ENCODE measurements at regions of chr17 and their contacts with region 1.

Region 1: GRCh38 chr17:75405365-75406221 is at the start of gene GRB2:
- DNase-seq: peak; percentile 100
- ATAC-seq: peak; percentile 90
- H3K4me3 Mint-ChIP-seq: peak within 1 kb of the TSS; percentile 96
- H3K27ac Mint-ChIP-seq: peak within 1 kb of the TSS; percentile 95
- H3K4me1 Mint-ChIP-seq: peaks cover 33% of the 10 kb centered on the region
- H3K27me3 Mint-ChIP-seq: peaks cover 2% of the 10 kb centered on the region
- total RNA-seq, gene GRB2: 149 to 155 TPM

Region 2: DNA sequence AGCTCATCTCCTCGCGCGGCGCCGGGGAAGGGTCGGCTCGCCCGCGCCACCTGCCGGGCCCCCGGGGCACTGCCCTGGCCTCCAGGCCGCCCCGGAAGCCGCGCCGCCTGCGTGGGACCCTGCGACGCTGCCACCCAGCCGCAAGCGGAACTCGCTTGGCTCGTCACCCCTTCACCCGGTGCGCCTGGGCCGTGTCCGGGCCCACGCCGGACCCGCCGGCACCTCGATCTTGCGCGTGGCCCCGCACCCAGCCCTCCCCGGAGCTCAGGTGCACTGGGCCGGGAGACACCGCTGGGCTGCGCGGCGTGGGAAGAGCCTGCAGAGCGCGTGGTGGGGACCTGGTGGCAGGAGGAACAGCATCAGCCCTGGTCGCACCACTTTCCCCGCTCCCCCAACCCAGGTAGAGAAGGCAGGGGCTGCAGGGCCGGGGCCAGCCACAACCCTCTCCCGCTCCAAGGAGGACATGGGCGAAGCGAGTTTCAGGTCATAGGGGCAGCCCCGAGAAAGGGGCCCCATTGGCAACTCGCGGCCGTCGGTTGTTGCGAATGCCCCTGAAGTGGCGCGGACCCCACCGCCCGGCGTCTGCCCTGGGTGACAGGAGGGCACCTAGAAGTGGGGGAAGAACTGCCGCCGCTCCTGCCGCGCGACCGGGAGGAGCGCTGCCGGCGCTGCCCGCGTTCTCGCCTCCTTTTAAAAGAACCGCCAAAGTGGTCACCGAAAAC is 134.2 kb before region 1 on chr17:
- POLR2A ChIA-PET with region 1: interaction called, 11 read pairs
- DNase-seq: peak; percentile 98
- ATAC-seq: peak; percentile 79
- H3K4me3 Mint-ChIP-seq: peak overlapping the region; percentile 89
- H3K27ac Mint-ChIP-seq: peak overlapping the region; percentile 89
- H3K4me1 Mint-ChIP-seq: peaks cover 28% of the 10 kb centered on the region
- H3K27me3 Mint-ChIP-seq: no peaks in the 10 kb centered on the region

Region 3: DNA sequence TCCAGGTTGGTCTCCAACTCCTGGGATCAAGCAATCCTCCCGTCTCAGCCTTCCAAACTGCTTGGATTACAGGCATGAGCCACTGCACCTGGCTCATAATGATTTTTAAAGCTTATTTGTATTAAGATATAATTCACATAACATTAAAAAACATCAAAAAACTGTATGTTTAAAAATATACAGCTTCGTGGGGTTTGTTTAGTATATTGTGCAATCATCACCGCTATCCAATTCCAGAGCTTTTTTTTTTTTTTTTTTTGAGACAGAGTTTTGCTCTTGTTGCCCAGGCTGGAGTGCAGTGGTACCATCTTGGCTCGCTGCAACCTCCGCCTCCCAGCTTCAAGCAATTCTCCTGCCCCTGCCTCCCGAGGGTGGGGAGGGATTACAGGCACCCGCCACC is 105.3 kb before region 1 on chr17:
- POLR2A ChIA-PET with region 1: no interaction called
- DNase-seq: no peak
- ATAC-seq: no peak
- H3K4me3 Mint-ChIP-seq: no peak overlapping the region
- H3K27ac Mint-ChIP-seq: no peak overlapping the region
- H3K4me1 Mint-ChIP-seq: peaks cover 9% of the 10 kb centered on the region
- H3K27me3 Mint-ChIP-seq: no peaks in the 10 kb centered on the region

Region 4: GRCh38 chr17:75319904-75320691 is 85.5 kb before region 1 on chr17:
- POLR2A ChIA-PET with region 1: interaction called, 10 read pairs
- DNase-seq: no peak
- ATAC-seq: no peak
- H3K4me3 Mint-ChIP-seq: no peak overlapping the region
- H3K27ac Mint-ChIP-seq: no peak overlapping the region
- H3K4me1 Mint-ChIP-seq: peaks cover 15% of the 10 kb centered on the region
- H3K27me3 Mint-ChIP-seq: no peaks in the 10 kb centered on the region

Region 5: DNA sequence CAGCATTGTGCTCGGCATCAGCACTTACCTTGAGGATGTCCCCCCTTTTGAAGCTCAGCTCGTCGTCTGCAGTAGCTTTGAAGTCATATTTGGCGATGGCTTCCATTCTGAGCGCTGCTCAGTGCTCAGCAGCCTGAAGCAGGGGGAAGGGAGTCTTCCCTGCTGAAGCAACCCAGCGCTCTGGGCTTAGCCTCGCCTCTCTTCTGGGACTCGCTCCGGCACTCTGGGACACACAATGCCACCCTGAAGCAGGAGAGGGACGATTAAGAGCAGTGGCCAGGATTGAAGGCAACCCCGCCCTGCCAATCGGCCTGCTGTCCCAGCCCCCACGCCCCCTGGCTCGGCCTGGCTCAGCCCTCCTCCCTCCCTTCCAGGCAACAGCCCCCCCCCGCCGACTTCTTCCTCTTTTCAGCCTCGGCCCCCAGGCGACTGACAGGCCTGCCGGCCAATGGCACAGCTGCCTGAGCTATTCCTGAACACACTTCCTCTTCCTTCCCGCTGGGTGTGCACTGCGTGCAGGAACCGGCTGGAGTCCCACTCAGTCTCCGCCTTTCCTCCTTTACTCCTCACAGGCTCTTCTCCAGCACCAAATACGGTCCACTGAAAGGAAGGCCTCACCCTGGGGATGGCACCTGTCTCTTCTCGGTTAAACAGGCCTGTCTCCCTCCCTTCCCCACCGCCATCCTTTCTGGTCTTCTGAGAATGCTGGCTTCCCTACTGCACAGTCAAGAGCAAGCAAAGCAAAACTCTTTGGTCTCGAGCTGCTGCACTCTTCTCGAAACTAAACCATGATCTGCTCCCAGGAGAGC is 11.9 kb before region 1 on chr17:
- POLR2A ChIA-PET with region 1: interaction called, 16 read pairs
- DNase-seq: peak; percentile 82
- ATAC-seq: peak; percentile 91
- H3K4me3 Mint-ChIP-seq: peak overlapping the region; percentile 99
- H3K27ac Mint-ChIP-seq: peak overlapping the region; percentile 83
- H3K4me1 Mint-ChIP-seq: peaks cover 59% of the 10 kb centered on the region
- H3K27me3 Mint-ChIP-seq: no peaks in the 10 kb centered on the region

Measured in activated naive CD8-positive, alpha-beta T cell treated with anti-CD3 and anti-CD28 coated beads, Interleukin-2, amount 10 ng/mL, durations not matched to agents 7 days and 5 days (primary cell).